Activated CD4-positive, alpha-beta T cell treated with anti-CD3 and anti-CD28 coated beads, Interleukin-2, amount 10 ng/mL, durations not matched to agents 24 days and 14 days (primary cell): ENCODE measurements at regions of chr12 and their contacts with region 1.

Region 1: DNA sequence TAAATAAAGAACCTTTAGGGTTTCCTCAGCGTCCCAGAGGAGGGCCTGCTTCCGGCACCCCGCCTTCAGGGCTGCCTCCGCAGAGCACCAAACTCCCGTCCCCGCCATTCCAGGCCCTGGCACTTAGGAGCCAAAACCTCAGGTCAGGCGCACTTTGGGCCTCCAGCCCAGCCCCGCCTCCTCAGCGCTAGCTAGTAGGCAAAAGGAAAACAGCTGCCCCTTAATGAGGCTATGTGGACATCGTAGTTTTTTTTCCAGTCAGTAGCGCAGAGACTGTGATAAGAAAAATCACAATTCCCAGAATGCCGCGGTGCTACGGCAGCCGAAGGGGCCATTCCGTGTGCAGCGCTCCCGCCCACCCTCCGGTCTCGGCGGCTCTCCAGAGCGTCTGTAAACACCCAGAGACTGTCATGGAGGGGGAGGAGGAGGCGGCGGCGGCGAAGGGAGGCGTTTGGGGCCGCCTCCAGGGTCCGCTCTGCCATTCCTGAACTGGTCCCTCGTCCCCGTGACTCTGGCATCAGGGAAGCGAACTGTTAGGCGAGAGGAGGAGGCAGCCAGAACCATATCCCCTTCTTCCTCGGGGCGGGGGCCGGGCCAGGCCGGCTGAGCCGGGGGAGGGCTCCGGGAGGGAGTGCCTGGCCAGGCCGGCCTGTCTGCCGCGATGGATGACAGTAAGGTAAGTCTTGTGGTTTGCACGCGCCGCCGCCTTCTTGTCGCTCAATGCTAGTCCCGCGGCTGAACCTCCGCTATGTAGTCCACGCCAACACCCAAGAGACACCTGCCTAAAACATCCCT is at the start of gene CREBL2:
- DNase-seq: peak; percentile 95
- H3K4me3 Mint-ChIP-seq: peak within 1 kb of the TSS; percentile 99
- H3K27ac Mint-ChIP-seq: peak within 1 kb of the TSS; percentile 98
- H3K4me1 Mint-ChIP-seq: peaks cover 48% of the 10 kb centered on the region
- H3K27me3 Mint-ChIP-seq: no peaks in the 10 kb centered on the region
- total RNA-seq, gene CREBL2: 17.3 TPM in 2 replicates

Region 2: GRCh38 chr12:12356886-12357718 is 254.6 kb before region 1 on chr12 and contains the start of gene BORCS5:
- intact Hi-C with region 1: loop called (anchors 1 kb)
- DNase-seq: peak; percentile 100
- H3K4me3 Mint-ChIP-seq: peak within 1 kb of the TSS; percentile 98
- H3K27ac Mint-ChIP-seq: peak within 1 kb of the TSS; percentile 99
- H3K4me1 Mint-ChIP-seq: peaks cover 46% of the 10 kb centered on the region
- H3K27me3 Mint-ChIP-seq: no peaks in the 10 kb centered on the region
- total RNA-seq, gene BORCS5: 34.0 and 37.0 TPM in 2 replicates

Region 3: DNA sequence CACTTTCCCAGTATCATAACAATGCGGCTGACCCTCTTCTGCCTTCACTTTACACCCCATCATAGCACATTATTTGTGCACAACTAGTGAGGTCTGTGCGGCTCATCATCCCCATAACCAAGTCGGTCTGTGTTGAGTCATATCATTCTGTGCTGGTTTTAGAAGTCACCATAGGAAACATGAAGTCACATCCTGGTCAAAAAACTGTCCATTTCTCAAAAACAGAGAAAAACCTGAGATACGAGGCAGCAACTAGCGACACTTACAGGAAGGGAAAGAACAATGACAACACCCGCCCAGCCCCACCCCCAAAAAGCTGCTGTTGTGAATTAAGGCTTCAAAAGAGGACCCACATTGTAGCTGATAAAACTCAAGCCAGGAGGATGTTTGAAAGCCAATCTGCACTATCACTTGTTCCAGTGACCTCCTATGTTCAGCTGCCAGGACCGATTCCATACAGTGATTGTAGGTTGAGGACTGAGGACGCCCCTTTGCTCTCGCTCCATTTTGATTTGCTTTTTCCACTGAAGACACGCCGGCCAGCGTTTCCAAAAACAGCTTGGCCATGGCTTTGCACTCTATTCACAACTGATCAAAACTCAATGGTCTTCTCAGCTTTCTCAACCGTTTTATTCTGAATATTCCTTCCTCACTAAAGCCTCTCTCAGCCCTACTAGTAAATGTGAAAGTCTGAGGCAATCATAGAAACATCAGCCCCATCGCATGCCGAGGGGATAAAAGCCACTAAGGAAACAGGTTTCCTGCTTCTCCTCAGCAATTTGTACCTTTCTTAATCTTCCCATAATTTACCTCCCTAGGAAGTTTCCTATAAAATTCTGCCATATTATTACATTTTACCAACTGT is 136.5 kb before region 1 on chr12:
- intact Hi-C with region 1: loop called (anchors 5 kb)
- DNase-seq: peak; percentile 90
- H3K4me3 Mint-ChIP-seq: peak overlapping the region; percentile 78
- H3K27ac Mint-ChIP-seq: peak overlapping the region; percentile 100
- H3K4me1 Mint-ChIP-seq: peaks cover 59% of the 10 kb centered on the region
- H3K27me3 Mint-ChIP-seq: no peaks in the 10 kb centered on the region

Region 4: DNA sequence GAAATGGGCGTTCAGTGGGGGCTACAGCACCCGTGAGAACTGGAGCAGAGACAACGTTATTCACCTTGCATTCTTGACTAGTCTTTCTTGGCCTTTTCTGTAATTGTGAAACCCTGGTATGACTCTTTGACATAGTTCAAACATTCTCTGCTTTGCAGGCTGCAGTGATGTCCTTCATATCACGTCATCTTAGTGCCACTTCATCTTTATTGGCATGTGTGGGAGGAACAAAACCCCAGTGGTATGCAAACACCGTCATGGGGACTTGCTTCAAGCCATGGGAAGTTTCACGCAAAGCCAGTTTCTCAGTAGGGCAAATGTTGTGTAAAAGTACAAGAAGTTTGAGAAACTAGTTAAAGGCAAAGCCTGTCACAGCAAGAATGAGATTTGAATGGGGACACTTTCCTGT is 28.8 kb before region 1 on chr12:
- intact Hi-C with region 1: loop called (anchors 1 kb)
- DNase-seq: peak; percentile 78
- H3K4me3 Mint-ChIP-seq: peak overlapping the region; percentile 15
- H3K27ac Mint-ChIP-seq: peak overlapping the region; percentile 79
- H3K4me1 Mint-ChIP-seq: peaks cover 36% of the 10 kb centered on the region
- H3K27me3 Mint-ChIP-seq: no peaks in the 10 kb centered on the region

Region 5: GRCh38 chr12:12592930-12593329 is 18.8 kb before region 1 on chr12:
- intact Hi-C with region 1: no loop called
- DNase-seq: no peak
- H3K4me3 Mint-ChIP-seq: no peak overlapping the region
- H3K27ac Mint-ChIP-seq: no peak overlapping the region
- H3K4me1 Mint-ChIP-seq: no peaks in the 10 kb centered on the region
- H3K27me3 Mint-ChIP-seq: peaks cover 9% of the 10 kb centered on the region

Region 6: DNA sequence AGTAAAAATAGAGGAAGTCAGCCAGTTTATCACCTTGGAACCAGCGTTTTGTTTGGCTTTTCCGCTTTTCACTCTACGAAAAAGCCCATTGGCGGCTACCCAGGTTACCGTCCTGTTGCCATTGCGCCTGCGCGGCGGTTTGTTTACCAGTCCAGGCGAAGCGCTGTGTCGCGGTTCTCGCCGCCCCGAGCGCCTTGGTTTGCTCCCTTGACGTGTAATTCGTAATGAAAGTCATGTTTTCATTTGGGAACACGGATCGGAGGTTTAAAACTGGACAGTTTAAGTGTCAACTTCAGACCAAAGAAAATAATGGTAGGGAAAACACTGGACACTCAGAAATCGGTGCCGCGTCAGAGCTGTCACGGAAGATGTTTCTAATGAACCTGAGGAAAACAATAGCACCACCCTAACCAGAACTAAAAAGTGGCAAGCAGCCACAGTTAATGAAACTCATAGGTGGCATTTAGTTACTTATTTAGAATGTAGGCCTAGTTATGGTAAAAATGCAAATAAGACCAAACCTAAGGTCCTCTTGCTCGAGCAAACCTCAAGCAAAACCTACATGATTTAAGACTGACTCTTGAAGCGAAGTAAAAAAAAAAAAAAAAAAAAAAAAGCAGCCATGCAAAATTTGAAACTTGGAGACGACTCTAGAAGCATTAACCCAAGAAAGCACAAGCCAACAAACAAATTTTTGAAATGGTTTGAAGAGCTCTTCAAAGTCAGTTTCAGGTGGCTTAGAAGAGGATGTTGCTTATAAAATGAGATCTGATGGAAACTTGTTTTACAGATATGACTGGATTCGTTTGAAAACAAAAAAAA is 85.1 kb after region 1 on chr12:
- intact Hi-C with region 1: loop called (anchors 1 kb)
- DNase-seq: peak; percentile 98
- H3K4me3 Mint-ChIP-seq: peak overlapping the region; percentile 94
- H3K27ac Mint-ChIP-seq: peak overlapping the region; percentile 99
- H3K4me1 Mint-ChIP-seq: peaks cover 60% of the 10 kb centered on the region
- H3K27me3 Mint-ChIP-seq: no peaks in the 10 kb centered on the region